ENCODE measurements at regions of chr7 and their contacts with region 1.

Region 1: GRCh38 chr7:76314042-76314721 is 11.7 kb downstream of the HSPB1 start:
- DNase-seq: peak; percentile 92 to 96 (median 95)
- H3K4me3 ChIP-seq: peak overlapping the region in 3 of 7 experiments; percentile 19 to 54 (median 30)
- H3K27ac ChIP-seq: no peak overlapping the region
- H3K4me1 ChIP-seq: peaks cover 3 to 37% (median 29%) of the 10 kb centered on the region in 4 experiments
- H3K27me3 ChIP-seq: no peaks in the 10 kb centered on the region

Region 2: GRCh38 chr7:76179686-76180085 is 134.5 kb before region 1 on chr7:
- CTCF ChIA-PET with region 1: interaction called, 78 read pairs
- POLR2A ChIA-PET with region 1: no interaction called
- DNase-seq: no peak
- H3K4me3 ChIP-seq: no peak overlapping the region
- H3K27ac ChIP-seq: no peak overlapping the region
- H3K4me1 ChIP-seq: peaks cover 0 to 5% (median 4%) of the 10 kb centered on the region in 4 experiments
- H3K27me3 ChIP-seq: no peaks in the 10 kb centered on the region

Region 3: GRCh38 chr7:76262683-76263402 is 51.3 kb before region 1 on chr7:
- CTCF ChIA-PET with region 1: interaction called, 16 read pairs
- POLR2A ChIA-PET with region 1: no interaction called
- DNase-seq: peak; percentile 61 to 72 (median 63)
- H3K4me3 ChIP-seq: no peak overlapping the region
- H3K27ac ChIP-seq: no peak overlapping the region
- H3K4me1 ChIP-seq: peaks cover 0 to 16% (median 10%) of the 10 kb centered on the region in 4 experiments
- H3K27me3 ChIP-seq: peaks cover 0 to 48% (median 8%) of the 10 kb centered on the region in 5 experiments

Region 4: DNA sequence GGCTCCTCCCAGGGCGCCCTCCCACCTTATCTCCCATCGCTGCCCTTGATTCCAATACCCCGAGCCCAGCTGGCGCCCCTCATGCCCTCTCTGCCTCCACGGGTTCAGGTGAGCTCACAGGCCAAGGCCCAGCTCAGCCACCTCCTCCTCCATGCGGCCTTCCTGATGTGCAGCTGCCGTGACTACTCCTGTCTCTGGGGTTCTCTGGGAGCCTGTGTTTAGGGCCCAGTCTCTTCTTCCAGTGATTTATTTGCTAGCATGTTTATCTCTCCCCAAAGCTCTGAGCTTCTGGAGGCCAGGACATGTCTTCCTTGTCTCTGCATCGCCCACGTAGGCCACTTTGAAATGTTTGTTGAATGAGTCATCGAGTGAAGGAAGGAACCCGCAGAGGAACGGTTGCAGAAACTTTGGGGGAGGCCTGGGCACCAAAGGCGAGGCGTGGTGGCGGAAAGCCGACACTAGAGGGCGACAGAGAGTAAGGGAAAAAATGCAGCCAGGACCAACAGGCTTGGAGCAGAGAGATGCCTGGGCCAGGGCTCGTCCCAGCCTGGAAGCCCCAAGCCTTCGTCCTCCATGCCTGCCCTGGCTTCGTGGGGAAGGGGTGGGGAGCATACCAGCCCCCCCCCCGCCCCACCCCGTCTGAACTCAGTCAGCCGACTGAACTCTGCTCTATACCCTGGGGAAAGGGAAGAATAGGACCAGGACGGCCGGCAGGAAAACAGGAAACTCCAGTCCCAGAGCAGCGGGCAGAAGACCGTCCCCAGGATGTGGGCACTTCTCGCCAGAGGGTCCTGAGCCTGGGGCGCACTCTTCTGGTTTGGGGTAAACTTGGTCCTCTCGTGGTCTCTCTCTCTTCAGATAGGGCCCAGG is 22.6 kb before region 1 on chr7:
- CTCF ChIA-PET with region 1: interaction called, 303 read pairs
- POLR2A ChIA-PET with region 1: interaction called, 13 read pairs
- DNase-seq: peak; percentile 92 to 97 (median 96)
- H3K4me3 ChIP-seq: peak overlapping the region in 6 of 7 experiments; percentile 13 to 63 (median 50)
- H3K27ac ChIP-seq: peak overlapping the region; percentile 40 to 72
- H3K4me1 ChIP-seq: peaks cover 3 to 52% (median 41%) of the 10 kb centered on the region in 4 experiments
- H3K27me3 ChIP-seq: no peaks in the 10 kb centered on the region

Region 5: GRCh38 chr7:76302347-76303201 is 11.6 kb before region 1 on chr7 and contains the start of gene HSPB1:
- CTCF ChIA-PET with region 1: interaction called, 20 read pairs
- POLR2A ChIA-PET with region 1: interaction called, 5 read pairs
- DNase-seq: peak; percentile 84 to 92 (median 90)
- H3K4me3 ChIP-seq: peak within 1 kb of the TSS; percentile 69 to 91 (median 74)
- H3K27ac ChIP-seq: peak within 1 kb of the TSS in 1 of 2 experiments; percentile 79
- H3K4me1 ChIP-seq: peaks cover 0 to 27% (median 20%) of the 10 kb centered on the region in 4 experiments
- H3K27me3 ChIP-seq: no peaks in the 10 kb centered on the region

Region 6: GRCh38 chr7:76327610-76328009 is 13.4 kb after region 1 on chr7:
- CTCF ChIA-PET with region 1: interaction called, 63 read pairs
- POLR2A ChIA-PET with region 1: interaction called, 29 read pairs
- DNase-seq: peak; percentile 98 to 100 (median 99)
- H3K4me3 ChIP-seq: peak overlapping the region in 1 of 7 experiments; percentile 34
- H3K27ac ChIP-seq: peak overlapping the region; percentile 94 to 95
- H3K4me1 ChIP-seq: peaks cover 27 to 65% (median 57%) of the 10 kb centered on the region in 4 experiments
- H3K27me3 ChIP-seq: no peaks in the 10 kb centered on the region

Region 7: DNA sequence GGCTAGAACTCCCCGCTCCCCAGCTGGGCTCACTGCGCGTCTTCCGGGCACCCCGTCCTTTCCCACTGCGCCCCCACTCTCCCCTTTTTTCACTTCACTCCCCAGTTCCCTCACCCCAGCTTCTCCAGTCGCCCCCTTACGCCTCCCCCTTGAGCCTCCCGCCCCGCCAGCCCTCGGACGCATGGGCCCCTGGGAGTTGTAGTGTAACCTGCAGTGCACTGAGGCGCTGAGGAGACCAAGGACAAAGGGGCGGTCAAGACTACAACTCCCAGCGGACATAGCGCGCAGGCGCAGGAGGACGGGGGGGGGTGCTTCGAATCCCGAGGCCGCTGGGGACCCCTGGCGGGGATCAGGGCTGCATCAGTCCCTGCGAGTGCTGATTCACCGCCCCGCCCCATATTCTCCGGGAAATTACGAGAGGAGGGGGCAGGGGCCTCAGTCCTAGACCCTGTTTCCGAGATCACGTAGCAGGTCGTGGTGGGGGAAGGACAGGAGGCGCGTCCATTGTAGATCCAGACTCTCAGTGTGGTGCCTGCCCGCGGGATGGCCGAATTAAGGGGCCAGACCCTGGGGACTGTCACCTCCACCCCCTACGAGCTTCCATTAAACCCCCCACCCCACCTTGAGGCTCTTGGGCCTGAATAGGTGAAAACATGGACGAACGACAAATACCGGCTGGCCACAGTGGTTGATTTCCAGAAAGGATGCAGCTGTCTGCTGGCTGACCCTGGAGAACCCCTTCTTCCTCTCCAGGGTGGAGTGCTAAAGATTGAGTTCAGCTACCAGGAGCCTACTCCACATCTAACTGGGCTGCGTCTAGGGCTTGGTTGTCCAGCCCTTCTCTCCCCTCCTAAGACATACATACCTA is 45.2 kb after region 1 on chr7:
- CTCF ChIA-PET with region 1: interaction called, 30 read pairs
- POLR2A ChIA-PET with region 1: interaction called, 17 read pairs
- DNase-seq: peak; percentile 99
- H3K4me3 ChIP-seq: peak overlapping the region; percentile 90 to 98 (median 97)
- H3K27ac ChIP-seq: peak overlapping the region; percentile 94 to 98
- H3K4me1 ChIP-seq: peaks cover 9 to 40% (median 29%) of the 10 kb centered on the region in 4 experiments
- H3K27me3 ChIP-seq: no peaks in the 10 kb centered on the region

Region 8: GRCh38 chr7:76397409-76398183 is 83.4 kb after region 1 on chr7:
- CTCF ChIA-PET with region 1: no interaction called
- POLR2A ChIA-PET with region 1: no interaction called
- DNase-seq: peak; percentile 59 to 81 (median 80)
- H3K4me3 ChIP-seq: peak overlapping the region; percentile 13 to 82 (median 64)
- H3K27ac ChIP-seq: peak overlapping the region in 1 of 2 experiments; percentile 2
- H3K4me1 ChIP-seq: peaks cover 2 to 29% (median 24%) of the 10 kb centered on the region in 4 experiments
- H3K27me3 ChIP-seq: no peaks in the 10 kb centered on the region